ENCODE measurements at regions of chr9 and their contacts with region 1.

Region 1: GRCh38 chr9:115810166-115810565 is 343.4 kb upstream of the PAPPA start:
- DNase-seq: no peak
- ATAC-seq: no peak

Region 2: GRCh38 chr9:115596021-115596742 is 214.0 kb before region 1 on chr9:
- intact Hi-C with region 1: no loop called
- DNase-seq: no peak
- ATAC-seq: no peak

Region 3: DNA sequence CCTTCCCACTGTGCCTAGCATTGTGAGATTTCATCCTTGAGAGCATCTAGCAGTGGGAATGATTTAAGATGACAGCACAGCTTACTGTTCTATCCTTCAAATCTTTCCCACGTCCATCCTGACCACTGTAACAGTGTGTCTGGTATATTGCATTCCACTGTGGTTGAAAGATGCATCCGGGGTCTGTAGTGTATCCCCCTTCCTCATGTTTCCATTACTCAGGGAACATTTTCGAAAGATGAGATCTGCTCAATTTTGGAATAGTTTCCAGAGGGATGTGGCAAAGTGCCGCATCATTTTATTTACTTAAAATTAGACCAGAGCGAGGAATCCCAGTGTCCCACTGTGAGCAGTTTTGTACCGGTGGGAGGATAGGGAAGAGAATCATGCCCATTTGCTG is 63.7 kb before region 1 on chr9:
- intact Hi-C with region 1: loop called (anchors 10 kb)
- DNase-seq: no peak
- ATAC-seq: no peak

Region 4: GRCh38 chr9:116303270-116303669 is 493.1 kb after region 1 on chr9:
- intact Hi-C with region 1: no loop called
- DNase-seq: no peak
- ATAC-seq: no peak

Measured in Right ventricle myocardium inferior (tissue), 1 donor.